ENCODE measurements at regions of chr19 and their contacts with region 1.

Region 1: DNA sequence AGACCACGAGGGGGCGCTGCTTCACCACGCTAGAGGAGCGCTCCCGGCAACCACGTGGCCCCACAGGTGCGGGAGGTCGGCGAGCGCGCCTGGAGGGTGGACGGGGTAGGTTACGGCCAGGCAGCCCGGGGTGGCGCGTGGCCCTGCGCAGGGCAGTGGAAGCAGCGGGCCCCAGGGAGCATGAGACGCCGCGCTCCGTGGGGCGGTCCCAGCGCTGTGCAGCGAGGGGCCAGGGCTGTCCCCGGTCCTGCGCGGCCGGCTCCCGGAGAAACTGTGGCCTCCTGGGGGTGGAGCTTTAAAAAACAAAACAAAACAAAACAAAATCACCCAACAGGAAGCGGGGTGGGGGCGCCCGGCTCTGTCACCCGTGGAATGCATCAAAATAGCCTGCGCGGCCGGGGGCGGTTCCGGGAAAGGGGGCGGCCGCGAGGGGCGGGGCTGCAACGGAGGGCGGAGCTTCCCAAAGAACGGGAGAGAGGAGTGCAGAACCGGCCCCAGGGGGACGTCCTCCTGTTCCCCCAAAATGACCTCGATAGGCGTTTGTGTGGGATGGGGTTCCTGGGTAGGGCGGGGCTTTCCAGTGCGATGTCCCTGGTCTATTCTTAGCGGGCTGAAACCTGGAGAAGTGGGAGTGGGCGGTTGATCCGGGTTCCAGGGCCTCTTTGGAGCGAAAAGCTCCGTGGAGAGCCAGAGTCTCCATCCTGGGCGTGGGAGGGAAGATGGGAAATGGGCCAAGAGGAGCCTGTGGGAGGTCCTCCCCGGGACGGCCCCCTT is 27.3 kb downstream of the NUMBL start:
- DNase-seq: peak; percentile 92
- H3K4me3 Mint-ChIP-seq: peak overlapping the region; percentile 77
- H3K27ac Mint-ChIP-seq: peak overlapping the region; percentile 66
- H3K4me1 Mint-ChIP-seq: peaks cover 31% of the 10 kb centered on the region
- H3K27me3 Mint-ChIP-seq: peaks cover 5% of the 10 kb centered on the region

Region 2: DNA sequence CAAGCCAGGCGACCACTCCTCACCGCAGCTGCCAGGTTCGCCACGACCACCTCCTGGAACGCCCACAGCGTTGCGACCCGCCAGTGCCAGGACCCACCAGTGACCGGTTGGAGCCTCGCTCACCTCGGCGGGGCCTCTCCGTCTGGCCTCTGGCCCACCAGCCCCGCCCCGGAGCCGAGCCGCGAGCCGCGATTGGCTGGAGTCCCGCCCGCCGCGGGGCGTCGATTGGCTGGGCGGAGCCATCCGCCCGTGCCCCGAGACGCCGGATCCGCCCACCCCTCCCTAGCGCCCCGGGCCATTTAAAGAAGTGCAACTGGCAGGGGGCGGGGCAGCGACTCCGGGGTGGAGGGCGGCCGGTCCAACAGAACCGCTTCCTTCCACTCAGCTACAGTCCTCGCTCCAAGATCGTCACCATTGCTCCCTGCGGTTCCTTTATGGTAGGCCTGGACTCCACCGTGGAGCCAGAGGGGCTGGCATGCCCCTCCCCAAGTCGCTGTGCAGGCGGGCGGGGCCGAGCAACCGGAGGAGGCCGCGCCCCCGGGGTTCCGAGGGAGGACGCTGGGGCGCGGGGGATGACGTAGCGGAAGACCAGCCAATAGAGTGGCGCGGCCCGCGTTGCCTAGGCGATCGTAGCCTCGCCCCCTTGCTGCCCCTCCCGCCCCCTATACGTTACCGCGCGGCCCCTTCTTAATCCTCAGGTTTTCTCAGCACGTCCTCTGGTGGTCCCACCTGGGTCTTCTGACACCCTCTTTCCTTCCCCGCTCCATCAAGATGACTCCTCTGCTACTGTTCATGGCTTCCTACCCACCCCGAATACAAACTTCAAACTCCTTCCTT is 218.7 kb before region 1 on chr19 and contains the start of gene SERTAD3:
- CTCF ChIA-PET with region 1: no interaction called
- POLR2A ChIA-PET with region 1: no interaction called
- DNase-seq: peak; percentile 98
- H3K4me3 Mint-ChIP-seq: peak within 1 kb of the TSS; percentile 99
- H3K27ac Mint-ChIP-seq: peak within 1 kb of the TSS; percentile 97
- H3K4me1 Mint-ChIP-seq: peaks cover 21% of the 10 kb centered on the region
- H3K27me3 Mint-ChIP-seq: no peaks in the 10 kb centered on the region
- total RNA-seq, gene SERTAD3: 18.0 to 20.3 TPM

Region 3: DNA sequence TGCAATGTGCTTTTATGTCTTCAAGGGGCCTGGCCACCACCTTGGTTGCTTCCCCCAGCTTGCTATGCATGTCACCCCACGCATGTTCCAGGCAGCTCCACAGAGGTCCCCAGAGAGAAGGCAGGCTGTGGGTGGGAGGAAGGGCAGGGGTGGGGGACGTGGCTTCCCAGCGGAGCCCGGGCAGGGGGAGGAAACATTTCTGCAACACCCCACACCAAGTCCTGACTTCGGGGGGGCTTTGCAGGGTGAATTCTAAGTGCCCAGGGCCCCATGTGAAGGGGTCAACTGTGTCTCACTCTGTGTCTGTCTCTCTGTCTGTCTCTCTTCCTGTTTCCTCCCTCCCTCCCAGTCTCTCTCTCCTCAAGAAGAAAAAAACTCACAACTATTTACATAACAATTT is 22.4 kb before region 1 on chr19:
- CTCF ChIA-PET with region 1: interaction called, 11 read pairs
- POLR2A ChIA-PET with region 1: no interaction called
- DNase-seq: no peak
- H3K4me3 Mint-ChIP-seq: no peak overlapping the region
- H3K27ac Mint-ChIP-seq: no peak overlapping the region
- H3K4me1 Mint-ChIP-seq: peaks cover 1% of the 10 kb centered on the region
- H3K27me3 Mint-ChIP-seq: peaks cover 1% of the 10 kb centered on the region

Region 4: GRCh38 chr19:40750059-40750873 is 87.2 kb after region 1 on chr19 and contains the start of gene ACTMAP:
- CTCF ChIA-PET with region 1: interaction called, 4 read pairs
- POLR2A ChIA-PET with region 1: interaction called, 12 read pairs
- DNase-seq: peak; percentile 100
- H3K4me3 Mint-ChIP-seq: peak within 1 kb of the TSS; percentile 96
- H3K27ac Mint-ChIP-seq: peak within 1 kb of the TSS; percentile 99
- H3K4me1 Mint-ChIP-seq: peaks cover 43% of the 10 kb centered on the region
- H3K27me3 Mint-ChIP-seq: no peaks in the 10 kb centered on the region
- total RNA-seq, gene ACTMAP: 18.1 to 18.8 TPM

Region 5: GRCh38 chr19:40806488-40807468 is 143.7 kb after region 1 on chr19:
- CTCF ChIA-PET with region 1: interaction called, 43 read pairs
- POLR2A ChIA-PET with region 1: interaction called, 16 read pairs
- DNase-seq: peak; percentile 84
- H3K4me3 Mint-ChIP-seq: peak overlapping the region; percentile 64
- H3K27ac Mint-ChIP-seq: peak overlapping the region; percentile 97
- H3K4me1 Mint-ChIP-seq: peaks cover 91% of the 10 kb centered on the region
- H3K27me3 Mint-ChIP-seq: peaks cover 5% of the 10 kb centered on the region

Region 6: GRCh38 chr19:40813182-40813958 is 150.3 kb after region 1 on chr19:
- CTCF ChIA-PET with region 1: interaction called, 56 read pairs
- POLR2A ChIA-PET with region 1: interaction called, 16 read pairs
- DNase-seq: no peak
- H3K4me3 Mint-ChIP-seq: no peak overlapping the region
- H3K27ac Mint-ChIP-seq: no peak overlapping the region
- H3K4me1 Mint-ChIP-seq: peaks cover 39% of the 10 kb centered on the region
- H3K27me3 Mint-ChIP-seq: peaks cover 34% of the 10 kb centered on the region

Region 7: DNA sequence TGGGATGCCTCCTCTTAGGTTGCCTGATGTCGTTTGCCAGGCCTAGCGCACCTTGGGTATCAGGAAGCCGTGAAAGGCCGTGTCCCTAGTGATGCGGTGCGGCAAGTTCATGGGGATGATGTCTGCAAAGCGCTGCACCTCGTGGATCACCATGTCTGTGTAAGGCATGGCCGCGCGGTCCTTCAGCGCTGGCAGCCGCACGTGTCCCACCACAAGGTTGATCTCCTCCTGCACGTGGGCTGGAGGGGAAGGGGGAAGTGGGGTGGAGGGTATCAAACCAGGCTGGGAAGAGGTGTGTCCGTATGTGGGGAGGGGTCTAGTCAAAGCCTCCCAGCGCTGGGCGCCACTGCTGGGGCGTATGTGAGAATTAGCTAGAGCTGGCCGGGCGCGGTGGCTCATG is 159.1 kb after region 1 on chr19:
- CTCF ChIA-PET with region 1: interaction called, 56 read pairs
- POLR2A ChIA-PET with region 1: interaction called, 15 read pairs
- DNase-seq: peak; percentile 12
- H3K4me3 Mint-ChIP-seq: no peak overlapping the region
- H3K27ac Mint-ChIP-seq: no peak overlapping the region
- H3K4me1 Mint-ChIP-seq: peaks cover 43% of the 10 kb centered on the region
- H3K27me3 Mint-ChIP-seq: no peaks in the 10 kb centered on the region

Measured in activated CD4-positive, alpha-beta memory T cell treated with anti-CD3 and anti-CD28 coated beads, Interleukin-2, amount 10 ng/mL, durations not matched to agents 7 days and 5 days (primary cell).